ENCODE measurements at regions of chr1 and their contacts with region 1.

Region 1: DNA sequence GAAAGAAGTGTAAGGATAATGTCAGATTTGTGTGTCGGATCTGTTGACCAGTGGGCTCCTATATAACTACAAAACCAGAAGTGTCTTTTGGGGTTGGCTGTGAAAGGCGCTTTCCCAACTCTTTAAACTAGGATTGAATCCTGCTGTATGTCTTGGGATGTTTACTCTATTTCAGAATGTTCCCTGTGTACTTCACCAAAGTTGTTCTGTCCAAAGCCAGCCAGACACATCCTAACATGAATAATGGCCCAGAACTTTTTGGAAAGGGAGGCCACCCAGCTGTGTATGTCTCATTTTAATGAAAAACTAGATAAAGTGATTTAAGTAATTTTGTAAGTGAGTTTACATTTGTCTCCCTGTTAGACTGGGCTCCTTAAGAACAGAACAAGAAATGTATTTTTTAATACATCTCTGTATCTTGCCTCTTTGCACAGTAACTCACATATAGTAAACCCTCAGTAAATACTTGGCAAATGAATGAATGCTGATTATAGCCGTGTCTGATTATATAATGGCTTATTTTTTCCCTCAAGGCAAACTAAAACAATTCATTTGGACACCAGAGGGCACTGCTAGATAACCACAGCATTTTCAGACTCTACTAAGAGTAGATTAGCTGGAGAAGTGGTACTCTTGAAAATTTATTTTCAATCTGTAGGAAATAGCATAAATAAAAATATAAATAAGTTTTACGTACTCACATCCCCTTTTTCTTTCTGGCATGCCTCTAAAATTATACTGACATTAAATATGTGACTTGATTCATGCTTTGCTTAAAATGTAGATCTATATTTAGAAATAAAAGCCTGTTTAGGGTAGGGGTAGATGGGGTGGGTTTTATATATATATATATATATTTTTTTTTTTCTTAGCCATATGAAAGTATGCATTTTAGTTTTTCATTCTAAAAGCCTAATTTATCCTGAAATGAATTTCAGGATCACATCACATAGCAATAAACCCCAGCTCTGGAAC is 23.8 kb downstream of the TSEN15 start:
- DNase-seq: peak in 4 of 5 donors; percentile 10 to 29 (median 26)
- H3K4me3 ChIP-seq: no peak overlapping the region
- H3K4me3 Mint-ChIP-seq: no peak overlapping the region
- H3K27ac ChIP-seq: no peak overlapping the region
- H3K27ac Mint-ChIP-seq: peak overlapping the region in 2 of 7 donors; percentile 30 to 46
- H3K4me1 ChIP-seq: no peaks in the 10 kb centered on the region
- H3K4me1 Mint-ChIP-seq: no peaks in the 10 kb centered on the region
- H3K27me3 ChIP-seq: no peaks in the 10 kb centered on the region
- H3K27me3 Mint-ChIP-seq: no peaks in the 10 kb centered on the region

Region 2: GRCh38 chr1:183968386-183968785 is 107.0 kb before region 1 on chr1:
- CTCF ChIA-PET with region 1: no interaction called
- POLR2A ChIA-PET with region 1: no interaction called
- intact Hi-C with region 1: no loop called
- DNase-seq: no peak
- H3K4me3 ChIP-seq: no peak overlapping the region
- H3K4me3 Mint-ChIP-seq: peak overlapping the region in 3 of 8 donors; percentile 35 to 47 (median 45)
- H3K27ac ChIP-seq: no peak overlapping the region
- H3K27ac Mint-ChIP-seq: peak overlapping the region in 3 of 7 donors; percentile 13 to 80 (median 44)
- H3K4me1 ChIP-seq: no peaks in the 10 kb centered on the region
- H3K4me1 Mint-ChIP-seq: peaks cover 6 to 20% (median 14%) of the 10 kb centered on the region in 4 donors
- H3K27me3 ChIP-seq: no peaks in the 10 kb centered on the region
- H3K27me3 Mint-ChIP-seq: peaks cover 0 to 7% of the 10 kb centered on the region in 2 donors

Region 3: GRCh38 chr1:183989078-183989577 is 86.2 kb before region 1 on chr1:
- CTCF ChIA-PET with region 1: no interaction called
- POLR2A ChIA-PET with region 1: no interaction called
- intact Hi-C with region 1: no loop called
- DNase-seq: no peak
- H3K4me3 ChIP-seq: no peak overlapping the region
- H3K4me3 Mint-ChIP-seq: peak overlapping the region in 2 of 8 donors; percentile 17 to 26
- H3K27ac ChIP-seq: no peak overlapping the region
- H3K27ac Mint-ChIP-seq: peak overlapping the region in 3 of 7 donors; percentile 39 to 72 (median 44)
- H3K4me1 ChIP-seq: peaks cover 9% of the 10 kb centered on the region
- H3K4me1 Mint-ChIP-seq: peaks cover 14 to 20% (median 14%) of the 10 kb centered on the region in 4 donors
- H3K27me3 ChIP-seq: no peaks in the 10 kb centered on the region
- H3K27me3 Mint-ChIP-seq: no peaks in the 10 kb centered on the region

Region 4: DNA sequence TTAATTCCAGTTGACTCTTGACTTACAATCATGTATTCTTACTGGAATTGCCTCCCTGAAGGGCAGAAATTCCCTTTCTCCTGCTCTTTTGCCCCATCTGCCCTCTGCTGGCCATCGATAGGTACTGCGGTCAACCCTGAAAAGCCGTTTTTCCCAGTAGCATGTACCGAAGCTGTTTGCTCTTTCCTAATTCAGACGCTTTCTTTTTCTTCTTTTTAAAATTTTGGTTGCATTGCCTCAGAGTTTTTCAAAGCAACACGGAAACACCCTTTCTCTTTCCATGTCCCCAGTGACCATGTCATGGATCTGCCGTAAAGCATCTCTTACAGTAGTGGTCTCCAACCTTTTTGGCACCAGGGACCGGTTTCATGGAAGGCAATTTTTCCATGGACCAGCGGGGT is 147.3 kb after region 1 on chr1:
- CTCF ChIA-PET with region 1: interaction called, 15 read pairs
- POLR2A ChIA-PET with region 1: no interaction called
- intact Hi-C with region 1: loop called (anchors 1 kb)
- DNase-seq: peak in 4 of 5 donors; percentile 18 to 34 (median 24)
- H3K4me3 ChIP-seq: no peak overlapping the region
- H3K4me3 Mint-ChIP-seq: peak overlapping the region in 3 of 8 donors; percentile 10 to 46 (median 18)
- H3K27ac ChIP-seq: no peak overlapping the region
- H3K27ac Mint-ChIP-seq: peak overlapping the region in 1 of 7 donors; percentile 18
- H3K4me1 ChIP-seq: no peaks in the 10 kb centered on the region
- H3K4me1 Mint-ChIP-seq: no peaks in the 10 kb centered on the region
- H3K27me3 ChIP-seq: no peaks in the 10 kb centered on the region
- H3K27me3 Mint-ChIP-seq: peaks cover 3 to 4% of the 10 kb centered on the region in 2 donors

Region 5: GRCh38 chr1:184691719-184692324 is 616.5 kb after region 1 on chr1:
- CTCF ChIA-PET with region 1: no interaction called
- POLR2A ChIA-PET with region 1: no interaction called
- intact Hi-C with region 1: loop called (anchors 10 kb)
- DNase-seq: no peak
- H3K4me3 ChIP-seq: no peak overlapping the region
- H3K4me3 Mint-ChIP-seq: no peak overlapping the region
- H3K27ac ChIP-seq: no peak overlapping the region
- H3K27ac Mint-ChIP-seq: peak overlapping the region in 2 of 7 donors; percentile 3 to 4
- H3K4me1 ChIP-seq: no peaks in the 10 kb centered on the region
- H3K4me1 Mint-ChIP-seq: peaks cover 0 to 15% (median 2%) of the 10 kb centered on the region in 4 donors
- H3K27me3 ChIP-seq: no peaks in the 10 kb centered on the region
- H3K27me3 Mint-ChIP-seq: no peaks in the 10 kb centered on the region